B cell (primary cell): ENCODE measurements at regions of chr2 and their contacts with region 1.

Region 1: GRCh38 chr2:121722479-121722878 is 14.2 kb downstream of the NIFK start:
- DNase-seq: no peak
- ATAC-seq: no peak
- H3K4me3 ChIP-seq: no peak overlapping the region
- H3K4me3 Mint-ChIP-seq: no peak overlapping the region
- H3K27ac ChIP-seq: no peak overlapping the region
- H3K27ac Mint-ChIP-seq: no peak overlapping the region
- H3K4me1 ChIP-seq: peaks cover 0 to 6% of the 10 kb centered on the region in 2 donors
- H3K4me1 Mint-ChIP-seq: peaks cover 3% of the 10 kb centered on the region
- H3K27me3 ChIP-seq: no peaks in the 10 kb centered on the region
- H3K27me3 Mint-ChIP-seq: no peaks in the 10 kb centered on the region
- CTCF ChIP-seq: no peak

Region 2: DNA sequence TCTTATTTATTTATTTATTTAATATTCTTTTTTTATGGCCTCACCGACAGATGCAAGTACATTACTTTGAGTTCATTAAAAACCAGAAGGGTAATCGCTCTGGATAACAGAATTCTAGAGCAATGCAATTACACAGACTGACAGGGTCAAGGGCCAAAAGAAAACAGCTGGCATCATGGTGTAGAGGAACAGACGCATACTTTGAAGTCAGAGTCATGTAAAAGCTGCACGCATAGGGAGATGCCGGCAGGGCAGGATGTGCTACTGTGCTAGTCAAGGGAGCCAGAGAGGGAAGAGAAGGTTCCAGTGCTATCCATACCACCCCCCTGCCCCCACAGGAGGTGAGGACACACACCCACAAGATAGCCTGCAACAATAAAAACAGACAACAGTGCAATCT is 322.3 kb before region 1 on chr2:
- CTCF ChIA-PET with region 1: interaction called, 48 read pairs
- POLR2A ChIA-PET with region 1: no interaction called
- intact Hi-C with region 1: no loop called
- DNase-seq: no peak
- ATAC-seq: no peak
- H3K4me3 ChIP-seq: no peak overlapping the region
- H3K4me3 Mint-ChIP-seq: no peak overlapping the region
- H3K27ac ChIP-seq: no peak overlapping the region
- H3K27ac Mint-ChIP-seq: no peak overlapping the region
- H3K4me1 ChIP-seq: no peaks in the 10 kb centered on the region
- H3K4me1 Mint-ChIP-seq: no peaks in the 10 kb centered on the region
- H3K27me3 ChIP-seq: no peaks in the 10 kb centered on the region
- H3K27me3 Mint-ChIP-seq: no peaks in the 10 kb centered on the region
- CTCF ChIP-seq: no peak

Region 3: DNA sequence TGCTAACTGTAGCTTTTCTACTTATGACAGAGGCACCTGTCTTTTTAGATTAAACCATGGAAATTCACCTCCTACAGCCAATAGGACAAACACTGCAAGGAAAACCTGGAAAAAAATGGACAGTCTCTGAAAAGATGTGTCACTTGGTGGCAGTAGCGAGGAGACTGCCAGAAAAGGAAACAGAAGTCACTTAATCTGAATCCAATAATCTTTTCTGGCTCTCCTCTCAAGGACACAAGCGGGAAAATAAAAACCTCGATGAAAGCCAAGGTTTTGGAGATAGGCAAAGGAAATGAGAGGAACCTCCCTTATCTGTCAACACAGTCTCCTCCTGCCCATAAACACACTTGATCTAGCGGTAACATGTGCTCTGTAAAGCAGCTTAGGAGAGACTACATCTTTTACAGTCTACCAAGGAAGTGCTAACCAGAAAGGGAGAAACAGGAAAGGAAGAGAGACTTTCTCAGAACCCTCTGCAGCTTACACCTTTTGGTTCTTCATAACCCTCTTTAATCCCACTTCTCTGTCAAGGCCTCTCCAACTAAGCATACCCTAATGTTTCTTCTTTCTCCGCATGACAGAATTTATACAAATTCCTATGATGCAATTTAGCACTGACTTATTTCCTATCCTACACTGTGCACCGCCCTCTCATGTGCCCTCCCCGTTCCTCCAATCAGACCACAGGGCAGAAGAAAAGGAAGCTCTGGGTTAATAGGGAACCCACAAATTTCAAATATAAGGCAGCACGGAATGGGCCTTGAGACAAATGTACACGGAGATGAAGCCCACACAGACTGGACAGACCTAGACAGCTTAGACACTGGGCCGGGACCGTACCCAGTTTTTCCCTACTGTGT is 126.0 kb before region 1 on chr2:
- CTCF ChIA-PET with region 1: no interaction called
- POLR2A ChIA-PET with region 1: no interaction called
- intact Hi-C with region 1: loop called (anchors 1 kb)
- DNase-seq: peak; percentile 77
- ATAC-seq: peak; percentile 93
- H3K4me3 ChIP-seq: peak overlapping the region in 3 of 5 experiments; percentile 10 to 34 (median 18)
- H3K4me3 Mint-ChIP-seq: peak overlapping the region; percentile 70
- H3K27ac ChIP-seq: peak overlapping the region; percentile 46 to 84
- H3K27ac Mint-ChIP-seq: peak overlapping the region; percentile 78
- H3K4me1 ChIP-seq: peaks cover 17 to 21% of the 10 kb centered on the region in 2 donors
- H3K4me1 Mint-ChIP-seq: peaks cover 53% of the 10 kb centered on the region
- H3K27me3 ChIP-seq: no peaks in the 10 kb centered on the region
- H3K27me3 Mint-ChIP-seq: no peaks in the 10 kb centered on the region
- CTCF ChIP-seq: no peak

Region 4: DNA sequence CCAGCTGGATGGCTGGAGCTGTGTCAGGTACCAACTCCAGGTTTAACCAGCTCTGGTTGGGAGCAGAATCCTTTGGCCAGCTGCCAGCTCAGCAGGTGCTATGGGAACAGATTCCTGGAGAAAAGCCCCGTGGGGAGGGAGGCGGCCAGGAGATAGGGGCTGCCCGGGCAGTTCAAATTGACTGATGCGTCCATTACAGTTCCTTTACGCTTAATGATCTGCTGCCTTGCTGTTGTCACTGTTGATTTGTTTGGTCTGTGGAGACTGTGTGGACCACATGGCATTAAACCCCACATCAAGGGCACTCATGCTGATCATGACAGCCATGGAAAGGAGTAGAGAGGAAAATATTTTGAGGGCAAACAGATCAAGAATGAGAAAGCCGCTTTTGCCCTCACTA is 232.9 kb after region 1 on chr2:
- CTCF ChIA-PET with region 1: no interaction called
- POLR2A ChIA-PET with region 1: no interaction called
- intact Hi-C with region 1: no loop called
- DNase-seq: no peak
- ATAC-seq: no peak
- H3K4me3 ChIP-seq: no peak overlapping the region
- H3K4me3 Mint-ChIP-seq: no peak overlapping the region
- H3K27ac ChIP-seq: no peak overlapping the region
- H3K27ac Mint-ChIP-seq: no peak overlapping the region
- H3K4me1 ChIP-seq: no peaks in the 10 kb centered on the region
- H3K4me1 Mint-ChIP-seq: no peaks in the 10 kb centered on the region
- H3K27me3 ChIP-seq: peaks cover 0 to 4% (median 0%) of the 10 kb centered on the region in 4 experiments
- H3K27me3 Mint-ChIP-seq: peaks cover 13% of the 10 kb centered on the region
- CTCF ChIP-seq: no peak